ENCODE measurements at regions of chr9 and their contacts with region 1.

Region 1: DNA sequence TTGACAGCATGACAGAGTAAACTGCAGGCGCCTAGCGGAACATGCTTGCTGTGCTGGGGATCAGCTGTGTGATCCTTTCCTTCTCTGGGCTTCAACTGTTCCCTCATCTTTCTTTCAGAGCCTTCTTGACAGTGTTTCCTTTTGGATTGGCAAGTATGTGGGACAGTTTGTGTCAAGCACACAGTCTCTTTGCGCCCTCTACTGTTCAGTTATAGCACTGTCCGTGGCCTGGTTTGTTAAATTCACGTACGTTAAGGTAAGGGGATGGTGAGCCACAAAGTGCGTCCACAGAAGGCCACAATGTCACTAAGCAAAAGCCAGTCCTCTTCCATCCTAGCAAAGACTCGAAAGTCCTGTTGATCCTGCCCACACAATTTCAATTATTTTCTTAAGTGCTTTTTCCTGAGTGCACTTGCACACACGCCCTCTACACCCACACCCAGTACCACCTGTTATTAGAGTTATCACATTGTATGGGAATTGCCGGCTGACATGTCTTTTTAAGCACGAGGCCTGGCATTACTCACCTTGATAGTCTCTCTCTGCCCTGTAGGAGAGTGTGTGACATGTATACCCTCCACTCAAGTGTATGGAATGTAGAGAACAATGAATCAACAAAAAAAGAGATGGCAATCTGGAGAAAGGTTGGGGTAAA is 22.5 kb upstream of the PTPN3 start:
- DNase-seq: peak; percentile 69
- ATAC-seq: peak; percentile 96
- H3K4me3 ChIP-seq: no peak overlapping the region
- H3K27ac ChIP-seq: no peak overlapping the region
- H3K4me1 ChIP-seq: no peaks in the 10 kb centered on the region
- H3K27me3 ChIP-seq: peaks cover 0 to under 1% of the 10 kb centered on the region in 2 experiments; a peak in 1 of 5 replicates
- CTCF ChIP-seq: peak; percentile 95
- EP300 ChIP-seq: no peak
- POLR2A ChIP-seq: no peak
- RAD21 ChIP-seq: peak; percentile 89

Region 2: GRCh38 chr9:109401168-109401989 is 119.2 kb before region 1 on chr9:
- CTCF ChIA-PET with region 1: interaction called, 10 read pairs
- POLR2A ChIA-PET with region 1: no interaction called
- in situ Hi-C with region 1: no loop called
- intact Hi-C with region 1: no loop called
- DNase-seq: peak; percentile 65
- ATAC-seq: peak; percentile 100
- H3K4me3 ChIP-seq: no peak overlapping the region
- H3K27ac ChIP-seq: no peak overlapping the region
- H3K4me1 ChIP-seq: no peaks in the 10 kb centered on the region
- H3K27me3 ChIP-seq: no peaks in the 10 kb centered on the region
- CTCF ChIP-seq: peak; percentile 86
- EP300 ChIP-seq: no peak
- POLR2A ChIP-seq: no peak
- RAD21 ChIP-seq: peak; percentile 70

Region 3: DNA sequence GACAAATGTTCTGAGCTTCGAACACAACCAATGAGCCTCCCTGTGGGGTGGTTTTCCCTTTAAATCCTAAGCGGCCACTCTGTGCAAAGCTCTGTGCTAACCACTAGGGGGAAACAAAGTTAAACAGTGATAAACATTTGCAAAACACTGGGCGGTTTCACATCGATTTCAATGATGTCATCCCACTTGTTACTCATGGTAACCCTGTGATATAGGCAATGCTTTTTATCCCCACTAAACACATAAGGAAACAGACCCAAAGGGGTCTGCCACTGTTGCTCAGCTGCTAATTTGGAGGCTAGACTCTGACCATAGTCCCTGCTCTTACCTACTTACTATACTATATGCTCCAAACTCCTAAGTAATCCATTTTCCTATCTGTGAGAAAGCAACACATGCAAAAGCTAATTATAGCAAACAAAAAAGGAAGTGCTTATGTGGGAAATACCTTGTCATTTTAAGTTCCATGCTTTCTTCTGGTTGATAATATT is 79.8 kb before region 1 on chr9:
- CTCF ChIA-PET with region 1: interaction called, 42 read pairs
- POLR2A ChIA-PET with region 1: no interaction called
- in situ Hi-C with region 1: loop called (anchors 5 kb)
- intact Hi-C with region 1: loop called (anchors 1 kb)
- DNase-seq: peak; percentile 82
- ATAC-seq: peak; percentile 94
- H3K4me3 ChIP-seq: no peak overlapping the region
- H3K27ac ChIP-seq: peak overlapping the region; percentile 54
- H3K4me1 ChIP-seq: peaks cover 16% of the 10 kb centered on the region
- H3K27me3 ChIP-seq: no peaks in the 10 kb centered on the region
- CTCF ChIP-seq: peak; percentile 80
- EP300 ChIP-seq: no peak
- POLR2A ChIP-seq: no peak
- RAD21 ChIP-seq: peak; percentile 67

Region 4: DNA sequence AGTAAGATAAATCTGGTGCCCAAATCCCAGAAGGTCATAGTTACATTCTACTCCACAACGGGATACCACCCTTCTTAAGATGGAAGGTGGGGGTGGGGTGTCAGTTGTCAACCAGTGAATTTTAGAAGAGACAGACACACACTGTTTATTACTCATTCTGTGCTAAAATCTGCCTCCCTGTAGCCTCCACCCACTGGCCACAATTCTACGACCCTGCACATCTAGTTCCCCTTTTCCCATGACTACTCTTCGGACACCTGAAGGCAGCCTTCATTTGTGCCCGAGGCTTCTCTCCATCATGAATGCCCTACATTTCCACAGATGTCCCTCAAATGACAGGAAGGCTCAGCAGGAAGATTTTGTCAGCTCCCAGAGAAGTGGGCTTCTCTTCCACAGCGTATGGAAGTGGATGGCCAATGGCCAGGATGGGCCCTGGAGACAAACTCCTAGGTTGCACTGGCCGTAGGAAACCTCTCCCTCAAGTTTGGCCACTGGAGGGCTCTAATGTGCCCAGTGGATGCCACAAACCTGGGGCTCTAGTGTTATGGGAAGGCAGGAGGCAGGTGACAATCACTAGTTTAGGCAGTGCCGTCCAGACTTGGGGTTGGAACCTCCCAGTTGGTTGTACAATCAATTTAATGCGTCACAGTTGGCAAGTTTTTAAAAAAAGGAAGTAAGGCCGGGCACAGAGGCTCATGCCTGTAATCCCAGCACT is 69.1 kb before region 1 on chr9:
- CTCF ChIA-PET with region 1: interaction called, 14 read pairs
- POLR2A ChIA-PET with region 1: no interaction called
- in situ Hi-C with region 1: no loop called
- intact Hi-C with region 1: loop called (anchors 1 kb)
- DNase-seq: peak; percentile 16
- ATAC-seq: peak; percentile 90
- H3K4me3 ChIP-seq: no peak overlapping the region
- H3K27ac ChIP-seq: no peak overlapping the region
- H3K4me1 ChIP-seq: no peaks in the 10 kb centered on the region
- H3K27me3 ChIP-seq: no peaks in the 10 kb centered on the region
- CTCF ChIP-seq: peak; percentile 50
- EP300 ChIP-seq: no peak
- POLR2A ChIP-seq: no peak
- RAD21 ChIP-seq: no peak

Region 5: GRCh38 chr9:109469646-109470358 is 50.8 kb before region 1 on chr9:
- CTCF ChIA-PET with region 1: interaction called, 14 read pairs
- POLR2A ChIA-PET with region 1: no interaction called
- in situ Hi-C with region 1: no loop called
- intact Hi-C with region 1: loop called (anchors 1 kb)
- DNase-seq: peak; percentile 63
- ATAC-seq: peak; percentile 99
- H3K4me3 ChIP-seq: no peak overlapping the region
- H3K27ac ChIP-seq: no peak overlapping the region
- H3K4me1 ChIP-seq: peaks cover 19% of the 10 kb centered on the region
- H3K27me3 ChIP-seq: no peaks in the 10 kb centered on the region
- CTCF ChIP-seq: peak; percentile 86
- EP300 ChIP-seq: no peak
- POLR2A ChIP-seq: no peak
- RAD21 ChIP-seq: peak; percentile 60

Region 6: GRCh38 chr9:109507421-109507838 is 13.2 kb before region 1 on chr9:
- CTCF ChIA-PET with region 1: no interaction called
- POLR2A ChIA-PET with region 1: no interaction called
- in situ Hi-C with region 1: no loop called
- intact Hi-C with region 1: no loop called
- DNase-seq: peak; percentile 92
- ATAC-seq: peak; percentile 89
- H3K4me3 ChIP-seq: peak overlapping the region; percentile 29 to 51 (median 32)
- H3K27ac ChIP-seq: no peak overlapping the region
- H3K4me1 ChIP-seq: peaks cover 51% of the 10 kb centered on the region
- H3K27me3 ChIP-seq: no peaks in the 10 kb centered on the region; a peak in 2 of 5 replicates
- CTCF ChIP-seq: peak; percentile 21; the same call in 1 of the 2 replicates
- EP300 ChIP-seq: peak; percentile 70 to 88; a peak in 3 of 4 replicates
- POLR2A ChIP-seq: no peak
- RAD21 ChIP-seq: no peak

Measured in HepG2 (cell line).